ENCODE measurements at regions of chr4 and their contacts with region 1.

Region 1: GRCh38 chr4:67746797-67747495 is 7.2 kb downstream of the GNRHR start:
- DNase-seq: peak; percentile 5
- H3K4me3 Mint-ChIP-seq: peak overlapping the region; percentile 1
- H3K27ac Mint-ChIP-seq: peak overlapping the region; percentile 73
- H3K4me1 Mint-ChIP-seq: peaks cover 17% of the 10 kb centered on the region
- H3K27me3 Mint-ChIP-seq: no peaks in the 10 kb centered on the region

Region 2: DNA sequence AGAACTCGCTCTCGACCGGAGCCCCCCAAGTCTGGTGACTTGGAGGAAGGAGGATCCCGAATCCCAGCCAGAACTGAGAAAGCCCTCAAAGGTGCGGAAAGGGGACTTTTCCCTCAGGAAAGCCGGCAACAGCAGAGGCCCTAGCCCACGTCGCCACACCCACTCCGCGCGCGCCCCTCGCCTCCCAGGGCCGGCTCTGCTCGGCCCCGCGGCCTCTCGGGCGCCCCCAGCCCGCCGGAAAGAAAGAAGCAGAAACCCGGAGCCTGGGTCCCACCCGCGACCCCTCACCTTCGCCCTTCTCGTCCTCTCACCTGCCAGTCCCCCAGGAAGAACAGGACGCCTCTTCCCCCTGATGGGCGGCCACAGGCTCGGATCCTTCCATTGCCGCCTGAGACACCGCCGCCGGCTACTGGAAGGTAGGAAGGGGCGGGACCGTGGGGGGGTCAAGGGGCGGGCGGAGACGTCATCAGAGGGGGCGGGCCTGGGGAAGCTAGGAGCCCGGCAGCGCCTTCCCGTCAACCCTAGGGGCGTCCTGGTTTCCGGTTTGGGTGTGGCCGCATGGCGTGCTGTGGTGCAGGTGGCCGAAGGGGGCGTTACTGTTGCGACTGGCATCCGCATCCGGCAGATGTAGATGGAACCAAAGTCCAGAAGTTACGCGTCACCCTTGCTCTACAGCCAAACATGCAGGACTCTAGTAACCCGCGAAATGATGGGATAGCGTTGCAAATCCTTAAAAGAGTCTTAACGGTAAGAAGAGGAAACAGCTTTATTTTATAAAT is 46.0 kb before region 1 on chr4 and contains the start of gene UBA6:
- CTCF ChIA-PET with region 1: interaction called, 5 read pairs
- intact Hi-C with region 1: loop called (anchors 1 kb)
- DNase-seq: peak; percentile 97
- H3K4me3 Mint-ChIP-seq: peak within 1 kb of the TSS; percentile 91
- H3K27ac Mint-ChIP-seq: peak within 1 kb of the TSS; percentile 96
- H3K4me1 Mint-ChIP-seq: peaks cover 48% of the 10 kb centered on the region
- H3K27me3 Mint-ChIP-seq: no peaks in the 10 kb centered on the region
- total RNA-seq, gene UBA6: 71.6 to 79.5 TPM

Region 3: DNA sequence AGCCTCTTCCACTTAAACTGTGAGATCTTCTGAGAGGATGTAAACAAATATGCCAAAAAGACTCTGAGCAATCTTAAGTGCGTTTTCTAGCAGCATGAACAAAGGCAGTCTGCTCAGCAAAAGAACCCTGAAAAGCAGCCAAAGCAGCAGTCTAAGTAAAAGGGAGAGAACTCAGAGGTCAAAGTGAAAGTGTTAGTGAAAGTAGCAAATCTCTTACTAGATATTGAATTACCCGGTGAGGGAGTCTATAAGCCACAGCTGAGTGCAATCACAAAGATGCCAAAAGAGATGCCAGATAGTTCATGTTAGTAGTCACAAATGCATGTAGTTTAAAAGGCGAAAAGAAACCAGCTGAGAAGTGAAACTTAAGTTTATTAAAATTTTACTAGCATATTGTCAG is 15.1 kb after region 1 on chr4:
- CTCF ChIA-PET with region 1: interaction called, 8 read pairs
- intact Hi-C with region 1: loop called (anchors 1 kb)
- DNase-seq: peak; percentile 11
- H3K4me3 Mint-ChIP-seq: no peak overlapping the region
- H3K27ac Mint-ChIP-seq: no peak overlapping the region
- H3K4me1 Mint-ChIP-seq: peaks cover 4% of the 10 kb centered on the region
- H3K27me3 Mint-ChIP-seq: no peaks in the 10 kb centered on the region

Region 4: GRCh38 chr4:67909905-67910584 is 163.1 kb after region 1 on chr4:
- CTCF ChIA-PET with region 1: interaction called, 20 read pairs
- intact Hi-C with region 1: loop called (anchors 1 kb)
- DNase-seq: no peak
- H3K4me3 Mint-ChIP-seq: no peak overlapping the region
- H3K27ac Mint-ChIP-seq: no peak overlapping the region
- H3K4me1 Mint-ChIP-seq: no peaks in the 10 kb centered on the region
- H3K27me3 Mint-ChIP-seq: peaks cover 2% of the 10 kb centered on the region

Region 5: GRCh38 chr4:68249434-68249833 is 502.5 kb after region 1 on chr4:
- CTCF ChIA-PET with region 1: no interaction called
- intact Hi-C with region 1: loop called (anchors 10 kb)
- DNase-seq: peak; percentile 25
- H3K4me3 Mint-ChIP-seq: no peak overlapping the region
- H3K27ac Mint-ChIP-seq: peak overlapping the region; percentile 88
- H3K4me1 Mint-ChIP-seq: peaks cover 16% of the 10 kb centered on the region
- H3K27me3 Mint-ChIP-seq: peaks cover 7% of the 10 kb centered on the region

Measured in activated naive CD4-positive, alpha-beta T cell treated with anti-CD3 and anti-CD28 coated beads for 36 hours (primary cell).